Caco-2 (cell line): ENCODE measurements at regions of chr5 and their contacts with region 1.

Region 1: DNA sequence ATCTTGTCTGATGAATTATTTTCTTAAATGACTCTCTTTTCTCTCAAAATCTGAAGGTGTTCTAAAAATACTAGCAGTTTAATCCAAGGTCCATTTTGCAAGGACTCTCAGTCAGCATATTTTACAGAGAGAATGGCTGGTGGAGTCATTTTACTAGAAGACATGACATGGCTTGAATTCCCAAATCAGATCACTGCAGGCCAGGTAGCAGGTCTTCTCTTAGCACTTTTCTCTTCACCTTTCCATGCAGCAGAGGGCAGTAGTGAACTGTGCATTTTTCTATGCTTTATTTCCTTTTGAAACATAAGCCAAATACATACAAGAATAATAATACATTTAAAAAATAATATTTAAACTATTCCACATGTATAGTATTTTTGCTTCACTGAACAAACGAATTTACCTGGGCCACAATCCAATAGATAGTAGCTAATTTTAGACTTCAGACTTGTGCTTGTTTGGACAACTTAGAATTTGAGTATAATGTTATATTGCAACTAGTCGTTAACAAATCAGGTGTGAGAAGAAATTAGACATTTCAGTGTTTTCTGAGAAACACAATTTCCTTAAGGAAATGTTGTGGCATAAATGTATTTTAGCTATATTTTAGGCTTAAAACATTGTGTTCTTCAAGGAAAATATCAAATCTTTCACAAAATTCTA is 289.4 kb upstream of the DAB2 start:
- DNase-seq: peak; percentile 43 to 56
- H3K4me3 ChIP-seq: no peak overlapping the region
- H3K4me3 Mint-ChIP-seq: no peak overlapping the region
- H3K27ac Mint-ChIP-seq: no peak overlapping the region
- H3K4me1 ChIP-seq: no peaks in the 10 kb centered on the region
- H3K4me1 Mint-ChIP-seq: peaks cover 10% of the 10 kb centered on the region
- H3K27me3 ChIP-seq: no peaks in the 10 kb centered on the region
- H3K27me3 Mint-ChIP-seq: peaks cover 2% of the 10 kb centered on the region
- CTCF ChIP-seq: peak; percentile 67

Region 2: DNA sequence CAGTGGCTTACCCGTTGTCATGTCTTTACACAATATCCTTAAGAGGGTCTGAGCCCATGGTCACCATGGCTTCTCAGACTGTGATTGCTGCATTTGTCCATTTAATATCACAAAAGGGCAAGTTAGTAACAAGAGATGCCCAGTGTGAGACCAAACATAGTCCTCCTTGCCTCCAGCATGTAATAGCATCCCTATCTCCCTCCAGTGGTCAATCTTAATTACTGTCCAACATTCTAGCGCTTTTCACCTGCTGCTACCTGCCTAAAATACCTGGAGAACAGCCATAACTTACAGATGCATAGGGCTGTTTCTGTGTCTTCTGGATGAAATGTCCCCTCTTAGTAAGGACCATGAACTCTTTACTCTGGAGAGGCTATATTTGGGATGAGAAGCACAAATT is 22.2 kb before region 1 on chr5:
- CTCF ChIA-PET with region 1: no interaction called
- POLR2A ChIA-PET with region 1: no interaction called
- intact Hi-C with region 1: no loop called
- DNase-seq: peak in 1 of 2 experiments; percentile 38
- H3K4me3 ChIP-seq: no peak overlapping the region
- H3K4me3 Mint-ChIP-seq: no peak overlapping the region
- H3K27ac Mint-ChIP-seq: no peak overlapping the region
- H3K4me1 ChIP-seq: no peaks in the 10 kb centered on the region
- H3K4me1 Mint-ChIP-seq: no peaks in the 10 kb centered on the region
- H3K27me3 ChIP-seq: no peaks in the 10 kb centered on the region
- H3K27me3 Mint-ChIP-seq: no peaks in the 10 kb centered on the region
- CTCF ChIP-seq: peak; percentile 42 to 46

Region 3: GRCh38 chr5:39730011-39730410 is 15.8 kb after region 1 on chr5:
- CTCF ChIA-PET with region 1: no interaction called
- POLR2A ChIA-PET with region 1: no interaction called
- intact Hi-C with region 1: no loop called
- DNase-seq: no peak
- H3K4me3 ChIP-seq: no peak overlapping the region
- H3K4me3 Mint-ChIP-seq: no peak overlapping the region
- H3K27ac Mint-ChIP-seq: no peak overlapping the region
- H3K4me1 ChIP-seq: no peaks in the 10 kb centered on the region
- H3K4me1 Mint-ChIP-seq: no peaks in the 10 kb centered on the region
- H3K27me3 ChIP-seq: no peaks in the 10 kb centered on the region
- H3K27me3 Mint-ChIP-seq: peaks cover 4% of the 10 kb centered on the region
- CTCF ChIP-seq: no peak

Region 4: DNA sequence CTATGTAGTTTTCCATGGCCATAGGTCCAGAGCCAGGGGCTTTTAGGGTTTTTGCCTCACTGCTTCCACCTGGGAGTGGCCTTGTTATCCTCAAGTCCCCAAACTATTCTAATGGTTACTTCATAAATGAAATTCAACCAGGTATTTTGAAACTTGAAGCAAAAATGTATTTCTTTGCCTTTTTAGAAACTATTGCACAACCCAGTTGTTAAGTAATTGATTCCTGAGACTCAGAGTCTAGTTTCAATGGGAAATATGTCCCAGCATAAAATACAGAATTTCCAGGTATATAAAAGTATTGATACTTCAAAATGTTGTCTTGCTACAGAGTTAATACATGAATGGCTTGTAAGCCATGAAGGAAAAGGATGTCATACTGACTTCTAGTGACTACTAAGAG is 166.8 kb after region 1 on chr5:
- CTCF ChIA-PET with region 1: interaction called, 3 read pairs
- POLR2A ChIA-PET with region 1: no interaction called
- intact Hi-C with region 1: loop called (anchors 2 kb)
- DNase-seq: no peak
- H3K4me3 ChIP-seq: no peak overlapping the region
- H3K4me3 Mint-ChIP-seq: no peak overlapping the region
- H3K27ac Mint-ChIP-seq: no peak overlapping the region
- H3K4me1 ChIP-seq: no peaks in the 10 kb centered on the region
- H3K4me1 Mint-ChIP-seq: no peaks in the 10 kb centered on the region
- H3K27me3 ChIP-seq: no peaks in the 10 kb centered on the region
- H3K27me3 Mint-ChIP-seq: no peaks in the 10 kb centered on the region
- CTCF ChIP-seq: no peak

Region 5: DNA sequence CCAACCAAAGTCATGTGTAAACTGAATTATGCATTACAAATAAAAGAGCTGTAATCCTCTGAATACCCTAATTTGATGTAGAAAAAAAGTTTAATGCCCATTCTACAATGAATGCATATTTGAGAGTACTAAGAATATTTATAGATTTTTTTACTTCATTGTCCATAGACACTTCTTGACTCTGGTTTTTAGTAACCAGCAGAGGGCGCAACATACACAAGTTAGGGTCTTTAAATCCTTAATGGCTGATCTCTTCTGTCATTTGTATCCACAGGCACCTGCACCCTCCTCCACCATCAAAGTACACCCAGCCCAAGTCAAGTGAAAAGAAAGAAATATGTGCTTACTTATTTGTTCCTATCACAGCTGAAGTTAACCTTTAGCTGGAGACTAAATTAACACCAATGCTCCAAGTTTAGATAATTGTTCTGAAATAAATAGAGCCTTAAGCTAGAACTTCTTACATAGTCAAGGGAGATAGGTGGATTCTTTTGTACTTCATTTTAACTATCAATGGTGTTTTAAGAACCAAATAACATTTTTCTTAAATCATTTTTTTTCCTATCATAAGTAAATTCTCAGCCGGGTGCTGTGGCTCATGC is 234.8 kb after region 1 on chr5:
- CTCF ChIA-PET with region 1: interaction called, 5 read pairs
- POLR2A ChIA-PET with region 1: no interaction called
- intact Hi-C with region 1: loop called (anchors 2 kb)
- DNase-seq: peak; percentile 49 to 59
- H3K4me3 ChIP-seq: no peak overlapping the region
- H3K4me3 Mint-ChIP-seq: no peak overlapping the region
- H3K27ac Mint-ChIP-seq: no peak overlapping the region
- H3K4me1 ChIP-seq: 0 out of 2 replicates have a peak, but pooled peaks cover 5% of the 10 kb centered on the region
- H3K4me1 Mint-ChIP-seq: no peaks in the 10 kb centered on the region
- H3K27me3 ChIP-seq: no peaks in the 10 kb centered on the region
- H3K27me3 Mint-ChIP-seq: peaks cover 6% of the 10 kb centered on the region
- CTCF ChIP-seq: peak; percentile 70

Region 6: GRCh38 chr5:40736103-40736875 is 1022.1 kb after region 1 on chr5:
- CTCF ChIA-PET with region 1: no interaction called
- POLR2A ChIA-PET with region 1: no interaction called
- intact Hi-C with region 1: loop called (anchors 1 kb)
- DNase-seq: peak in 1 of 2 experiments; percentile 42
- H3K4me3 ChIP-seq: no peak overlapping the region
- H3K4me3 Mint-ChIP-seq: no peak overlapping the region
- H3K27ac Mint-ChIP-seq: no peak overlapping the region
- H3K4me1 ChIP-seq: peaks cover 23% of the 10 kb centered on the region
- H3K4me1 Mint-ChIP-seq: peaks cover 23% of the 10 kb centered on the region
- H3K27me3 ChIP-seq: no peaks in the 10 kb centered on the region
- H3K27me3 Mint-ChIP-seq: no peaks in the 10 kb centered on the region
- CTCF ChIP-seq: peak; percentile 65 to 72